ENCODE measurements at regions of chr1 and their contacts with region 1.

Region 1: DNA sequence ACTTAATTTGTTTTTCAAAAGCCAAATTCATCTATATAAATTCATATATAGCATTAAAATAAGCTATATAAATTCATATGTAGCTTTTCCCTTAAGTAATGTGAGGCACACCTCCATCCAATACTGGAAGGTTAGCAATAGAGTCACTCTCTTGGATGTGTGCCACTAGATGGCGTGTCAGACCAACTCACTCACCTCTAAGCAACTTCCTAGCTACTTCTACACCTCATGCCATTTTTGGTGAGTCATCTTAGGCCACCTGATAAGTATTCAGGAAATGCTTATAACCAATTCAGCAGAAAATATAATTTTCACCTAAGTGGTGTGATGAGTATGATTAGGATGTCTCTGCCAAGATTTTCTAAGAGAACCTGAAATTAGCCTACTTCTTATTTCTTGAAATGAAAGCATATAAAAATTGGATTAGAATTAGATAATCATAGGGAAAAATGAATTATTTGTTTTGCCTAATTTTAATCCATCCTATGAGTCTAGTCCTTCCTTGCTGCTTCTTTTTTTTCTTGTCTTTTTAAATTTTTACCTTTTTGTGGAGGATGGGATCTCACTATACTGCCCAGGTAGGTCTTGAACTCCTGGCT is 34.4 kb upstream of the TADA1 start:
- DNase-seq: peak; percentile 43
- H3K4me3 ChIP-seq: no peak overlapping the region
- H3K27ac ChIP-seq: no peak overlapping the region
- H3K27me3 ChIP-seq: no peaks in the 10 kb centered on the region
- CTCF ChIP-seq: peak; percentile 67

Region 2: DNA sequence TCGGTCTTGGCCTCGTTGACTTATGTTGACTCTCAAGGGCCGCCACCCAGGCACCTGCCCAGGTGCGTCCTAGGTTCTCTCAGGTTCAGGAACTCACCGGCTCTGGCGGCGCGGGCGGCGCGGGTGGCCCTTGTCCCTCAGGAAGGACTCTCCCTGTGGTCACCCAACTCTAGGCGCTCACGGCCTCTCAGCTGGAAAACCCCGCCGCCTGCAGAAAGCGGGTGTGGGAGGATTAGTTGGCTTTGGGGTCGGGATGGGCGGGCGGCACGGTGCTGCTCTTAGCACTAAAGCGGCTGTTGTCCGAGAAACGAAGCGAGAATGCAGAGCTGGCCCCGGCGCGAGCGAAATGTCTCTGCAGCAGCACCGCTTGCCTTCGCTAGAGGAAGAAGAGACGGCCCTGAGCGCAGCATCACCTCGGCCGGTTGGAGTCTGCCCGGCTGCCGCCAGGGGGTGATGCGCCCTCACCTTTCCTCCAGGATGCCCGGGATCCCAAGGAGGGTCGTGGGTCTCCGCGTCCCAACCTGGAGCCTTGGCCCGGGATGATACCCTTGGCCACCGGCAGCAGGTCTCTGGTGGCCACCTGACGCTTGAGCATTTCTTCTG is 26.4 kb before region 1 on chr1:
- CTCF ChIA-PET with region 1: interaction called, 11 read pairs
- POLR2A ChIA-PET with region 1: no interaction called
- DNase-seq: no peak
- H3K4me3 ChIP-seq: no peak overlapping the region
- H3K27ac ChIP-seq: no peak overlapping the region
- H3K27me3 ChIP-seq: peaks cover 26% of the 10 kb centered on the region
- CTCF ChIP-seq: peak; percentile 63

Region 3: DNA sequence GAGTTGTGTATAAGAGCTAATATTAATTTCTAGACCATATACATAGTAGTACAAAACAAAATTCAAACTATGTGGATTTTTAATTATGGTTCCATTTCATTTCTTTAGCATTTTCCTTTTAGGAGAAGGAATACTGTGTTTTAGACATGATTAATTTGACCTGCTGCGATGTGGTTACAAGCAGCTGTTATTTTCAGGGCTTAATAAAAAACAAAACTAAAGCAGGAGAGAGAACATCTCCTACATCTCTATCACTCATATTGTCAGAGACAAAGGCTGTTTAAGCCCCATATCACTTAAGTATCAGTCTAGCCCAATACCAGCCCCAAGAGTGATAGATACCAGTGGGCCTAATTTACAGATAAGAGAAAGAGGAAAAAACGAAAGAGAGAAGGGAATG is 17.2 kb after region 1 on chr1:
- CTCF ChIA-PET with region 1: interaction called, 11 read pairs
- POLR2A ChIA-PET with region 1: no interaction called
- DNase-seq: no peak
- H3K4me3 ChIP-seq: no peak overlapping the region
- H3K27ac ChIP-seq: no peak overlapping the region
- H3K27me3 ChIP-seq: peaks cover 4% of the 10 kb centered on the region
- CTCF ChIP-seq: no peak

Region 4: DNA sequence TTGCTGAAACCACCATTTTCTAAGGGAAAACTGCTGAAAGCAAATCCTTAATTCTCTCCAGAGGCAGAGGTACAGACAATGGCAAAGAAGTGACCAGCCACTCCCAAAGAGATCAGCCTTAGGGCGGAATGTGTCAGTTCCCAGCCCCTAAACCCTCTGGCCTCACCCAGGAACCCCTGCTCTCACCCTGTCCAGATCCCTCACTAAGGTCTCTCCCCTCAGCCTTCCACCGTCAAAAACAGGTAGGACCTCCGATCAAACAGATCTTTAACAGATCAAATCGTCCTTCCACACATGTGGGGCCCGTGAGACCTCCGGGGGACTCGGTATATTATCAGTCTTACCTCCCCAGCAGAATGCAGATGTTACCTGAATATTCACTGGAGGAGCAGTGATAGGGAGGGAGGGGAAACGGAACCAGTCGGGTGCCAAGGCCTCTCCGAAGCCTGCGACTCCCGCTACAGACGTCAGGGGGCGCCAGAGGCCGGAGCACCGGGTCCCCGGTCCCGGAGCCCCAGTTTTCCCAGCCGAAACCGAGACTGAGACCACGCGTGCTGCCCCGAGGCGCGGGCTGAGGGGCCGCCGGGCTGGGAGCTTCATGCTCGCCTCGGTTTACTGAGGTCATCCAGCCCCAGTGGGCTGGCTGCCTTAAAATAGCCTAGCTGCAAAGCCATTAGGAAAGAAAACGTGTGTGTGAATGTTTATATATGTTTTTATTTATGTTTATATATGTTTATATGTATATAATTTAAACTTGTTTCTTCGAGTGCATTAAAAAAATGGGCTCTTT is 156.0 kb after region 1 on chr1:
- CTCF ChIA-PET with region 1: interaction called, 284 read pairs
- POLR2A ChIA-PET with region 1: no interaction called
- DNase-seq: no peak
- H3K4me3 ChIP-seq: peak overlapping the region; percentile 36; the same call in 1 of the 2 replicates
- H3K27ac ChIP-seq: no peak overlapping the region
- H3K27me3 ChIP-seq: no peaks in the 10 kb centered on the region
- CTCF ChIP-seq: peak; percentile 94

Measured in AG04450 (cell line).